Endothelial cell of umbilical vein (primary cell): ENCODE measurements at regions of chr10 and their contacts with region 1.

Region 1: DNA sequence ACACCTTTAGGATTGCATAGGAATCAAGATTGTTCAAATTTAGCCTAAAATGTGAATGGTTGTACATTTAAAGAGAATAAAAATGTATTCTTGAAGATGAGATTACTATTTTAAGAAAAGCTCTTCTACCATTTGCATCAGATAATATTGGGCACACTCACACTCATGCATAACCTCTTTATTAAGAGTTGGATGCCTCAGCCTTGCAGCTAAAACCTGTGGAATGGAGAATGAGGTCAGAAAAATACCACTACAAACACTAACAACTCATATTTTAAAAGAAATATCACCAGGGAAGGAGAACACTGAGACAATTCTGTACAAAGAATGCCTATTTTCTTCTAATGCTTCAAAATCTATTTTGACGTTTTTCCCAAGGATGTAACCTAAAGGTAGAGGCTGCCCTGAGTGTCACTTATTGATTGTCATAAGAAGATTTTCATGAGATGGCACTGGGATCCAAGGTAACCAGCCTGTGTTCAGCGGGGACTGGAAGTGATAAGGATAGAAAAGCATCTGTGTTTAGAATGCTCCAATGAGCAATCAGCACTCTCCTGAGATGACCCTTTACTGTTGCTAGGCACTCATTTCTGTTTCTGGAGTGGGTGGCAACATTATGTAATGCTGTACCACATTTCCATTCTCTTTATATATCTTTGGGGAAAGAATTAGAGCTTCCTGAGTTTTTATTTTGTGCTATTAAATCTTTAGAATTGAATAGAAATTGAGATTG is 26.6 kb downstream of the REEP3 start:
- DNase-seq: no peak
- H3K4me3 ChIP-seq: no peak overlapping the region
- H3K27ac ChIP-seq: no peak overlapping the region
- H3K4me1 ChIP-seq: peaks cover 5% of the 10 kb centered on the region
- H3K27me3 ChIP-seq: no peaks in the 10 kb centered on the region
- CTCF ChIP-seq: no peak
- POLR2A ChIP-seq: no peak

Region 2: DNA sequence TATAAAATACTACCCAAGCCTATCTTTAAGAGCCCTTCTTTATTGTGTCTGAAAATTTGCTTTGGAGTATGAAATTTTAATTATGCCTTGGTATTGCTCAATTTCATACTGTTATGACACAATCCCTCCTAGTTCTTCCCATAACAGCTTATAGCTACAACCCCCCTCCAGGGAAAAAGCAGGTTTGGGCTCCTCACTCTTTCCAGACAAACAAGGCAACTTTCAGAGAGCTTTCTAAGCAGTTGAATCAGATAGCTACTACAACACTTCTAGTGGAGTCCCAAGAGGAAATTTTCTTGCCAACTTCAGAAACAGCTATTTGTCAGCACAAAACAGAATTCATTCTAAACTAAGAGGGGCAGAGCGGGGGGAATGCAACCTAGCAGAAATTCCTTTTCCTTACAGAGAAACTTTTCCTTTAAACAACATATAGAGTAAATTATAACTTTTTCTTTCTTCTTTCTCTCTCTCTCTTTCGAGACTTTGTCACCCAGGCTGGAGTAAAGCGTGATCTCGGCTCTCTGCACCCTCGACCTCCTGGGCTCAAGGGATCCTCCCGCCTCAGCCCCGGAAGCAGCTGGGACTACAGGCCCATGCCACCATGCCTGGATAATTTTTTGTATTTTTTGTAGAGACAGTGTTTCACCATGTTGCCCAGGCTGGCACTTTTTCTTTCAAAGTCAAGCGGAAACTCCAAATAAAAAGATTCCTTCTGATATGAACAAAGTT is 56.0 kb before region 1 on chr10:
- CTCF ChIA-PET with region 1: no interaction called
- POLR2A ChIA-PET with region 1: no interaction called
- dilution Hi-C with region 1: no loop called
- intact Hi-C with region 1: no loop called
- DNase-seq: no peak
- H3K4me3 ChIP-seq: no peak overlapping the region
- H3K27ac ChIP-seq: no peak overlapping the region
- H3K4me1 ChIP-seq: no peaks in the 10 kb centered on the region
- H3K27me3 ChIP-seq: no peaks in the 10 kb centered on the region
- CTCF ChIP-seq: no peak
- POLR2A ChIP-seq: no peak

Region 3: GRCh38 chr10:63537536-63537935 is 10.3 kb before region 1 on chr10:
- CTCF ChIA-PET with region 1: interaction called, 13 read pairs
- POLR2A ChIA-PET with region 1: no interaction called
- dilution Hi-C with region 1: no loop called
- intact Hi-C with region 1: no loop called
- DNase-seq: no peak
- H3K4me3 ChIP-seq: no peak overlapping the region
- H3K27ac ChIP-seq: no peak overlapping the region
- H3K4me1 ChIP-seq: no peaks in the 10 kb centered on the region
- H3K27me3 ChIP-seq: no peaks in the 10 kb centered on the region
- CTCF ChIP-seq: no peak
- POLR2A ChIP-seq: no peak

Region 4: DNA sequence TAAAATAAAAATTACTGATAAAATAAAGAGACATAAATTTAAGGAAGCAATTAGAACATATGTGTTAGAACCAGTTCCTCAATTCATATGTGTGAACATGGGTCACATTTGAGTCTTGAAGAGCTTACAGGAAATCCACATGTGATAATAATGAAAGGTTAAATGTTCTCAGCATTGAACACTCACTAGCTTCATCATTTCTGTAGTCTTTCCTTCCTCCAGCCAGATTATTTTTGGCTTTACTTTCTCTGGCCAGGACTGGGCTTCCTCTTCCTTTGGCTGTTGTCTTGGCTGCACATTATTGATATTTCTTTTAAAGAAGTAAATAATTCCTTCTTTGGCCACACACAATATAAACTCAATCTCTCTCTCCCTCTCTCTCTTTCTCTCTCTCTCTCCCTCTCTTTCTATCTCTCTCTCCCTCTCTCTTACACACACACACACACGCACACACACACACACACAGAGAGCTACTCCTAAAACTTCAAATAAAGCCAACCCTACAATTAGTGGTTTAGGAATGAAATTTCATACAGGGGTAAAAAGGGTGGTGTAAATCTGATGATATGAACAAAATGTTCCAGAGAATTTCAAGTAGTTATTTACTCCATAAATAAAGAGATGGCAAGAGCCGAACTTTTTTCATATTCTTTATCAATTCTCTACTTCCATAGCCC is 144.6 kb after region 1 on chr10:
- CTCF ChIA-PET with region 1: no interaction called
- POLR2A ChIA-PET with region 1: no interaction called
- dilution Hi-C with region 1: no loop called
- intact Hi-C with region 1: no loop called
- DNase-seq: peak; percentile 65
- H3K4me3 ChIP-seq: no peak overlapping the region
- H3K27ac ChIP-seq: no peak overlapping the region
- H3K4me1 ChIP-seq: peaks cover 8% of the 10 kb centered on the region
- H3K27me3 ChIP-seq: no peaks in the 10 kb centered on the region
- CTCF ChIP-seq: no peak
- POLR2A ChIP-seq: no peak

Region 5: DNA sequence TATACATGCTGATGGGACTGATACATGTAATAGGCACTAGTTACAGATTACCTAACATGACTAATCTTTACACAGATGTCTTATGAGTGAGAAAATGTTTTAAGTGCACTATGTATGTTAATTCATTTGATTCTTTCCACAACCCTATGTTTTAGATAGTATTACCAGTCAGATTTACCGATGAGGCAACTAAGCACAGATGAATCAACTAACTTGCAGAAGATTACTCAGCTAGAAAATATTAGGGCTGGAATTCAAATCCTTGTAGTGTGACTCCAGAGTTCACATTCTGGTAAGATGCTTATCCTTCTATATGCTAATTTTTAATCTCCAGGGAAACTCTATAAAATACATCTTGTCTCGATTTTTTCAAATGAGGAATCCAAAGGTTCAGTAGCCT is 938.4 kb after region 1 on chr10:
- CTCF ChIA-PET with region 1: no interaction called
- POLR2A ChIA-PET with region 1: no interaction called
- dilution Hi-C with region 1: no loop called
- intact Hi-C with region 1: no loop called
- DNase-seq: no peak
- H3K4me3 ChIP-seq: no peak overlapping the region
- H3K27ac ChIP-seq: no peak overlapping the region
- H3K4me1 ChIP-seq: no peaks in the 10 kb centered on the region
- H3K27me3 ChIP-seq: no peaks in the 10 kb centered on the region
- CTCF ChIP-seq: no peak
- POLR2A ChIP-seq: no peak